ENCODE measurements at regions of chr11 and their contacts with region 1.

Region 1: GRCh38 chr11:63838678-63839507 is at the start of gene MARK2:
- H3K4me3 ChIP-seq: peak within 1 kb of the TSS; percentile 81
- H3K27ac ChIP-seq: peak within 1 kb of the TSS; percentile 84
- H3K4me1 ChIP-seq: 0 out of 2 replicates have a peak, but pooled peaks cover 6% of the 10 kb centered on the region
- CTCF ChIP-seq: no peak

Region 2: GRCh38 chr11:63768237-63769043 is 70.5 kb before region 1 on chr11 and contains the start of gene ZFTA:
- CTCF ChIA-PET with region 1: interaction called, 14 read pairs
- POLR2A ChIA-PET with region 1: interaction called, 6 read pairs
- H3K4me3 ChIP-seq: peak within 1 kb of the TSS; percentile 51
- H3K27ac ChIP-seq: peak within 1 kb of the TSS; percentile 71; the same call in 1 of the 2 replicates
- H3K4me1 ChIP-seq: no peaks in the 10 kb centered on the region
- CTCF ChIP-seq: no peak

Region 3: GRCh38 chr11:63871962-63872799 is 33.3 kb after region 1 on chr11:
- CTCF ChIA-PET with region 1: interaction called, 42 read pairs
- POLR2A ChIA-PET with region 1: interaction called, 7 read pairs
- H3K4me3 ChIP-seq: no peak overlapping the region
- H3K27ac ChIP-seq: no peak overlapping the region
- H3K4me1 ChIP-seq: peaks cover 7% of the 10 kb centered on the region
- CTCF ChIP-seq: peak; percentile 37; the same call in 1 of the 2 replicates

Region 4: DNA sequence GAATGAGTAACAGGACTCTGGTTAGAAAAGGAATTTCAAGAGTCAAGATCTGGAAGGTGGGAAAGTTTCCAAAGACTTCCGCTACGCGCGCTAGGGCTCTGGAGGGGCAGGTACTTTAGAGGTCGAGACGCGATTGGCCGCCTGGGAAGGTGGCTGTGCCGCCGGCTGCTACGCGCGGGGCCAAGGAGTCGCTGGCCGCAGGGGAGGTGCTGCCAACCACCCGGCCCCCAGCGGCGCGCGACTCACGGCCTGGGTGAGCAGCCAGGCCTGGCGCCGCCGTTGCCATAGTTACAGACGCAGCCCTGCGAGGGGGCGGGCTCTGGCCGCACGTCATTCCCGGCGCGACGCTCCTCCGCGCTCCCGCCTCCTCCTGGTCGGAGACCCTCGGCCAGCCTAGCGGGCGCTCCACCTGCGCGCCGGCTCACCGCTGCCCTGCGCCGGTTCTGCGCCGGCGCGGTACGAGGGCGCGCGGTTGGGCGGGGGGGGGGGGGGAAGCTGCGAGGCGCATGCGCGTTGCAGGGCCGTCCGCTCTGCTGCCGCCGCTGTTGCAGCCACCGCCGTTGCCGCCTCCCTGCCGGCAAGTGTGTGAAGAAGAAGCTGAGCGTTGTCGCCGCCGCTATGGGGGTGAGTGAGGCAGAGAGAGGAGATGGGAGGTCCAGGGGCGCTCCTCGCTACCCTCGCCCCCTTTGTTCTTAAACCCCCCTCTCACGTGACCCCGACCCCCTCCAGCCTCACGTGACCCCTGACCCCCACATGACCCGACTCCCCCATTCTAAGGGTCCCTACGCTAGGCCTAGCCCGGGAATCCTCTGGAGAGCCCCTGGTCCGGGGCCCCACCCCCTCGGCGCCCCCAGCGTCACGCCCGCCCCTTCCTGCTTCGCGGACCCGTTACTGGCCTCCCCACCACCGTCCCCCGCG is 99.8 kb after region 1 on chr11 and contains the start of gene NAA40:
- CTCF ChIA-PET with region 1: interaction called, 135 read pairs
- POLR2A ChIA-PET with region 1: interaction called, 7 read pairs
- H3K4me3 ChIP-seq: peak within 1 kb of the TSS; percentile 90
- H3K27ac ChIP-seq: peak within 1 kb of the TSS; percentile 57; the same call in 1 of the 2 replicates
- H3K4me1 ChIP-seq: no peaks in the 10 kb centered on the region
- CTCF ChIP-seq: peak; percentile 25; the same call in 1 of the 2 replicates

Region 5: GRCh38 chr11:64000026-64000739 is 161.3 kb after region 1 on chr11:
- CTCF ChIA-PET with region 1: interaction called, 12 read pairs
- POLR2A ChIA-PET with region 1: interaction called, 3 read pairs
- H3K4me3 ChIP-seq: no peak overlapping the region
- H3K27ac ChIP-seq: peak overlapping the region; percentile 16; the same call in 1 of the 2 replicates
- H3K4me1 ChIP-seq: no peaks in the 10 kb centered on the region
- CTCF ChIP-seq: no peak

Region 6: DNA sequence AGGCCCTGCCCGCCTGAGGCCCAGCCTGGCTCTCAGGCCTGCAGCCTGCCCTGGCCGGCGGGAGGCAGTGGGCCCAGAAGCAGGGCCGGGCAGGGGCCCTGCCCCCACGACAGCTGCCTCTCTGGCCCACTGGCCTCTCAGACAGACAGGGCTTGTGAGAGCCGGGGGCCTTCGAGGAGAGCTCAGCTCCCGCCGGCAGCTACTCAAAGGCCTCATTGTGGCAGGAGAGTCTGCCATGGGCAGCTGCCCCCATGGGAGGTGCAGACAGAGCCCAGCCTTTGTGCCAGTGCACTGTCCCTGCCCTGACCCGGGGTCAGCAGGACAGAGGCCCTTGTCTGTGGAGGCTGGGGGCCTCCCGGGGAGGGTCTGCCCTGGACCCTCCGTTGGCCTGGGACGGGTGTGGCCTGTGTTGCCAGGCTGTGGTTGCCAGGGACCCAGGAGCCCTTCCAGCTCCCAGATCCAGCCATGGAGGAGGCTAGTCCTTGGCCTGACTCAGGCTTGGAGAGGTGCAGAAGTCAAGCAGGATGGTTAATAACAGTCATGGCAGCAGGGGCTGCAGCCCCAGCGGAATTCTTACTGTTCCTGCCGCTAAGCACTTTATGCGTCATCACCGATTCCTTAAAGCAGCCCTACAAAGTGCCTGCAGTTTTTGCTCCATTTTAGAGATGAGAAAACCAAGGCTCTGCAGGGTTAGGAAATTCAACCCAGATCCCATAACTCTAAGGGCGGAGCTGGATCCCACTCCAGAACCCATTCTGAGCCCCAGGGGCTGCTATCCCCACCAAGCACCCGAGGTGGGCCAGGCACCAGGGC is 209.4 kb after region 1 on chr11:
- CTCF ChIA-PET with region 1: no interaction called
- POLR2A ChIA-PET with region 1: no interaction called
- H3K4me3 ChIP-seq: no peak overlapping the region
- H3K27ac ChIP-seq: no peak overlapping the region
- H3K4me1 ChIP-seq: no peaks in the 10 kb centered on the region
- CTCF ChIP-seq: no peak

Measured in HEK293 (cell line).